B cell (primary cell): ENCODE measurements at regions of chr1 and their contacts with region 1.

Region 1: DNA sequence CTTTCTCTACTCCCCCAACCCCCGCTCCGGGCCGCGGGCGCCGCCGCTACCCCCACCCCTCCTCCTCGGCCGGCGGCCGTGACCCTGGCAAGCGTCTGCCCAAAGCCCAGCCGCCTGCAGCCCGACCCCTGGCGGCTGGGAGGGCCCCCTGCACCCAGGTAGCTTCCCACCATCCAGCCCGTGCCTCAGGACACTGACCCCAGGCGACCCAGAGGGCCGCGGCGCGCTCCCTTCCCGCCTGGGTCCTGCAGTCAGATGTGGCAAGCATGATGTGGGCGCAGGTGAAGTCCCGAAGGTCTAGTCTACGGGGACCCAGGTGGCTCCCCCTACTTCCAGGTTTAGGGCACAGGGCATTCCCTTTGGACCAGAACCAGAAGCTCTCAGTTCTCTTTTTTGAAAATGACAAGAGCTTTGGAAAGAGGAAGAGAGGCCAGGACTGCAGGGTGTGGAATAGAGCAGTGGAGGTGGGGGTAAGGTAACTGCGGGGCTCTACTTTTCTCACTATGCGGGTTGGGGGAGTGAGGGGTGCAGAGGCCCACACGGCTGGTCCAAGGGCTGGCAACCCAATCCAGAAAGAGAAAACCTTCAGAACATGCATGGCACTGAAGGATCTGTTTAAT is at the start of gene DENND4B:
- DNase-seq: peak; percentile 89
- ATAC-seq: peak; percentile 54
- H3K4me3 ChIP-seq: peak within 1 kb of the TSS; percentile 54 to 95 (median 85)
- H3K4me3 Mint-ChIP-seq: peak within 1 kb of the TSS; percentile 94
- H3K27ac ChIP-seq: peak within 1 kb of the TSS; percentile 91 to 98
- H3K27ac Mint-ChIP-seq: peak within 1 kb of the TSS; percentile 96
- H3K4me1 ChIP-seq: peaks cover 36 to 53% of the 10 kb centered on the region in 2 donors
- H3K4me1 Mint-ChIP-seq: peaks cover 56% of the 10 kb centered on the region
- H3K27me3 ChIP-seq: no peaks in the 10 kb centered on the region
- H3K27me3 Mint-ChIP-seq: no peaks in the 10 kb centered on the region
- CTCF ChIP-seq: peak; percentile 87
- total RNA-seq, gene DENND4B: 272 and 275 TPM in 2 replicates

Region 2: DNA sequence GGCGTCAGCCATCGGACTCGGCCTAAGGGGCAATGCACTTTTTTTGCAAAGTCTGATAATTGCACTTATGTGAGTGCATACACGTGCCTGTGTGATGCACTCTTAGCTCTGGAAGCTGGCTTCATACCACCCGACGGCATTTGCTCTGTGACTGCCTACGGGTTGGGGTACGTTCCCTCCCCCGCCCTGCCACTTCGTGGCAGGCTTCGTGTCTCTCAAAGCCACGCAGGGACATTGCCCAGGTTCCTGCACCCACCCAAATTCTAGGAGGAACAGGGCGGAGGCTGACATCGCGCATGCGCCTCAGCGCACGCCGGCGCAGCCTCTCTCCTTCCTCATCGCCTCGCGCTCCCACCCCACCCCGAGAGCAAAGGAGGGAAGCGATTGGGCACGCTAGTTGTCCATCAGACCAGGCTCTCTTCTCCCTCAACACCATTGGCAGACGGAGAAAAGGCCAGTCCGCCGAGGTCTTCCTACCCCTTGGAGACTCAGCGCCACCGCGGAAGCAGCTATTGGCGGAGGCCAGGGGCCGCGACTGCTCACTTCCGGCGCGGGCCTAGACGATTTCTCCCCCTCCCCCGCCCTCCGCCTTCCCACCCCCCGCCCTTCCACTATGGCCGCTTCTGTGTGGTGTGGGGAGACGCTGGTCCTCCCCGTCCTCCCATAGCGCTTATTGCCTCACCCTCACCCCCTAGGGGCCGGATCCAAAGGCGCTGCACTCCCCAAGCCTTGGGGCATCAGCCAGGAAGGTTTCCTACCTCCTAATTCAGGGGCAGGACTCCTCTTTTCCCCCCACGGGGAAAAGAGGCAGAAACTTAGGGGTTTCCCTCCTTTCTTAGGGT is 219.0 kb before region 1 on chr1 and contains the start of gene INTS3:
- CTCF ChIA-PET with region 1: no interaction called
- POLR2A ChIA-PET with region 1: no interaction called
- intact Hi-C with region 1: loop called (anchors 5 kb)
- DNase-seq: peak; percentile 99
- ATAC-seq: peak; percentile 99
- H3K4me3 ChIP-seq: peak within 1 kb of the TSS; percentile 78 to 99 (median 91)
- H3K4me3 Mint-ChIP-seq: peak within 1 kb of the TSS; percentile 84
- H3K27ac ChIP-seq: peak within 1 kb of the TSS; percentile 97 to 98
- H3K27ac Mint-ChIP-seq: peak within 1 kb of the TSS; percentile 86
- H3K4me1 ChIP-seq: peaks cover 9 to 16% of the 10 kb centered on the region in 2 donors
- H3K4me1 Mint-ChIP-seq: peaks cover 36% of the 10 kb centered on the region
- H3K27me3 ChIP-seq: no peaks in the 10 kb centered on the region
- H3K27me3 Mint-ChIP-seq: no peaks in the 10 kb centered on the region
- CTCF ChIP-seq: no peak
- total RNA-seq, gene INTS3: 69.1 and 69.3 TPM in 2 replicates

Region 3: GRCh38 chr1:153796791-153797659 is 149.7 kb before region 1 on chr1:
- CTCF ChIA-PET with region 1: interaction called, 12 read pairs
- POLR2A ChIA-PET with region 1: interaction called, 14 read pairs
- intact Hi-C with region 1: loop called (anchors 2 kb)
- DNase-seq: peak; percentile 88
- ATAC-seq: peak; percentile 92
- H3K4me3 ChIP-seq: no peak overlapping the region
- H3K4me3 Mint-ChIP-seq: no peak overlapping the region
- H3K27ac ChIP-seq: no peak overlapping the region
- H3K27ac Mint-ChIP-seq: peak overlapping the region; percentile 76
- H3K4me1 ChIP-seq: peaks cover 5 to 18% of the 10 kb centered on the region in 2 donors
- H3K4me1 Mint-ChIP-seq: peaks cover 12% of the 10 kb centered on the region
- H3K27me3 ChIP-seq: no peaks in the 10 kb centered on the region
- H3K27me3 Mint-ChIP-seq: no peaks in the 10 kb centered on the region
- CTCF ChIP-seq: peak; percentile 85

Region 4: GRCh38 chr1:153816283-153816889 is 130.3 kb before region 1 on chr1:
- CTCF ChIA-PET with region 1: interaction called, 11 read pairs
- POLR2A ChIA-PET with region 1: interaction called, 4 read pairs
- intact Hi-C with region 1: loop called (anchors 1 kb)
- DNase-seq: no peak
- ATAC-seq: no peak
- H3K4me3 ChIP-seq: no peak overlapping the region
- H3K4me3 Mint-ChIP-seq: no peak overlapping the region
- H3K27ac ChIP-seq: no peak overlapping the region
- H3K27ac Mint-ChIP-seq: no peak overlapping the region
- H3K4me1 ChIP-seq: peaks cover 0 to 1% of the 10 kb centered on the region in 2 donors
- H3K4me1 Mint-ChIP-seq: peaks cover 3% of the 10 kb centered on the region
- H3K27me3 ChIP-seq: no peaks in the 10 kb centered on the region
- H3K27me3 Mint-ChIP-seq: no peaks in the 10 kb centered on the region
- CTCF ChIP-seq: no peak

Region 5: DNA sequence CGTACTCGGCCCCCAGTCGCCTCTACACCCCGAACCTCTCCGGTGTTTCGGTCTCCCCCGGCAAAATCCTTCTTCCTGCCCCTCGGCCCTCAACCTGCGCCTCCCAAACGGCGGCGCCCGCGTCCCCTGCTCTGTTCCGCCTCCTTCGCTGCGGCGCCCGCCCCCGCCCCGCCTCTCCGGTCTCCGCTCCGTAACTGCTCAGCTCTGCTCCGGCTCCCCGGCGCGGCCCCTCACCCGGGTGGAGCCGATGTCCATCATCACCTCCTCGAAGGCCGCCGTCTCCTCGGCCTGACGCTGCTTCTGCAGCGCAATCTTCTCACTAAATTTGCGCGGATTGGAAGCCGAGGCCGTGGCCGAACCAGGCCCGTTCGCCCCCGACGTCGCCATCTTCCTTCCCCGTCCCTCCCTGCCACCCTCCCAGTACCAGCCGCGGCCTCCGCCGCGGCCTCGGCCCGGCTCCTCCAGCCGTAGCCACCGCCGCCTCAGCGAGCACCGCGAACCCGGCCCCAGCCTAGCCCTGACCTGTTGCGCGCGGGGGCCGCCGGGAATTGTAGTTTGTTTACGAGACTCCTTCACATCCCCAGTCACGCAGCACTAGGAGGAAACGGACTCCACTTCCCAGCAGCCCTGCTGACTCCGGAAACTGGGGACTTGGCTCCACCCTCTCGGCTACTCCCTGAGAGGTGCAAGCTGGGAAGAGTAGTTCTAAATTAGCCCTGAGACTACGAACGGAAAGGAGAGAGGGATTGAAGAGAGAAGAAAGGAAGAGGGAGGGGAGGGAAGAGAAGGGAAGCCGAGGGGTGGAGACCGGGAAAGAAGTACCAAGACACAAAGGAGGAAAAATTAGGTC is 11.6 kb after region 1 on chr1 and contains the start of gene CRTC2:
- CTCF ChIA-PET with region 1: interaction called, 65 read pairs
- POLR2A ChIA-PET with region 1: interaction called, 115 read pairs
- intact Hi-C with region 1: loop called (anchors 1 kb)
- DNase-seq: peak; percentile 97
- ATAC-seq: peak; percentile 85
- H3K4me3 ChIP-seq: peak within 1 kb of the TSS; percentile 79 to 98 (median 92)
- H3K4me3 Mint-ChIP-seq: peak within 1 kb of the TSS; percentile 100
- H3K27ac ChIP-seq: peak within 1 kb of the TSS; percentile 87 to 97
- H3K27ac Mint-ChIP-seq: peak within 1 kb of the TSS; percentile 97
- H3K4me1 ChIP-seq: peaks cover 44 to 47% of the 10 kb centered on the region in 2 donors
- H3K4me1 Mint-ChIP-seq: peaks cover 67% of the 10 kb centered on the region
- H3K27me3 ChIP-seq: no peaks in the 10 kb centered on the region
- H3K27me3 Mint-ChIP-seq: no peaks in the 10 kb centered on the region
- CTCF ChIP-seq: no peak
- total RNA-seq, gene CRTC2: 153 and 157 TPM in 2 replicates

Region 6: GRCh38 chr1:153977250-153978240 is 30.8 kb after region 1 on chr1 and contains the start of gene JTB:
- CTCF ChIA-PET with region 1: interaction called, 46 read pairs
- POLR2A ChIA-PET with region 1: interaction called, 40 read pairs
- intact Hi-C with region 1: no loop called
- DNase-seq: peak; percentile 87
- ATAC-seq: peak; percentile 96
- H3K4me3 ChIP-seq: peak within 1 kb of the TSS; percentile 59 to 96 (median 90)
- H3K4me3 Mint-ChIP-seq: peak within 1 kb of the TSS; percentile 98
- H3K27ac ChIP-seq: peak within 1 kb of the TSS; percentile 55 to 87
- H3K27ac Mint-ChIP-seq: peak within 1 kb of the TSS; percentile 96
- H3K4me1 ChIP-seq: peaks cover 16 to 22% of the 10 kb centered on the region in 2 donors
- H3K4me1 Mint-ChIP-seq: peaks cover 34% of the 10 kb centered on the region
- H3K27me3 ChIP-seq: no peaks in the 10 kb centered on the region
- H3K27me3 Mint-ChIP-seq: no peaks in the 10 kb centered on the region
- CTCF ChIP-seq: no peak
- total RNA-seq, gene JTB: 99.1 and 106 TPM in 2 replicates